Dorsolateral prefrontal cortex (tissue), 120 donors: ENCODE measurements at regions of chr12 and their contacts with region 1.

Region 1: DNA sequence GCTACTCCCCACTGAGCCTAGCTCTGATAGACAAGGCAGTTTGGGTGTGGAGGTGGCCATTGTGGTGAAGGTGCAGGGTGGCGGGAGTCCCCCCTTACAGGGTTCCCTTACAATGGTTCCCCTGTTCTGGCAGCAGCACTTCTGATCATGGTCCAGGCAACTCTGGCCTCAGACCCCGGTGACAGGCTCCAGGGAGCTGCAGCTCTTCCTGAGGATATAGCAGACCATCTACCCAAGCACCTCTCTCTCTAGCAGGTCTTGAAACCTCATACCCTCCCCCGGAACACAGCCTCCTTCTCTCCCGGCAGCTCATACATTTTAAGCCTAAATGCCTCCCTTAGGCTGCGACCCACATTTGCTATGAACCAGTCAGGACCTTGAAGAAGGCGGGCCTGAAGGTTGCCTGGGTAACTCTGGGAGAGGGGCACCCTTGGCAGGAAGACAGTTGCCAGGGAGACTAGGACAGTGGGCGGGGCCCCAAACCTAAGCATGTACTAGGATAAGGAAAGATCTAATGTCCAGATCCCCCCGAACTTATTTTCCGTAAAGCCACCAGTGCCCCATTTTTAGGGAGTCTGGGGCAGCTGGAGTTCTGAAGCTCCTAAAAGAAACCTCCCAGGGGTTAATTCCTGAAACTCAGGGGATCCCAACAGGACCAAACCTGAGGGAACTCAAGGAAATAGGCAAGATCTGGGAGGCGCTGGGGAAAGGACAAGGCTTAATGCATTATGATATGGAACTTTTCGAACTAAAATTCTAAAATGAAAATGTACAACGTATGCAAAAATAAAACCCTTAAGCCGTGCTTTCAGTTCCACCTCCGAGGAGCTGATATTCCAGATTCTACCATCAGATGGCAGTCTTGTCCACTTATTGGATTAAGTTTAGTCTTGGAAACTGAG is 4.5 kb upstream of the GDF11 start:
- DNase-seq: peak; percentile 48 to 88 (median 80)
- H3K4me3 ChIP-seq: peak overlapping the region; percentile 32 to 78 (median 63)
- H3K27ac ChIP-seq: peak overlapping the region; percentile 25 to 96 (median 87)
- H3K27me3 ChIP-seq: no peaks in the 10 kb centered on the region
- CTCF ChIP-seq: peak; percentile 79 to 98 (median 94)

Region 2: DNA sequence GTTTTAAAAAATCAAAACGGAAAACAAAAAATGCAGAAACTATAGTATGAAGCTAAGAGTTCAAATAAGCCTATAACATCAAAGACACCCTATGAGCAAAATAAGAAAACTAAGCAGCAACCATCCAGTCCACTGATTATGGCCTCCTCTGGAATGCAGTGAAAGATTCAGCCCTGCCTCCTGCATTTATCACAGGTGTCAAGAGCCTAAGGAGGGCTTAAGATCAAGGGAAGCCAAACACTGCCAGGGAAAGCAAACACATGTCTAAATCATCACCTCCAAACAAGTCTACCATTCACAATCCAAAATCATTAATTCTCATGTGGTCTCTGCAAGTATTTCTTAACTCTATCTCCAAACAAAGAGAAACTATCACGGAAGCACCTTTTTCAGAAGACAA is 50.8 kb after region 1 on chr12:
- intact Hi-C with region 1: loop called in 1 of 2 experiments (anchors 5 kb)
- DNase-seq: no peak
- H3K4me3 ChIP-seq: no peak overlapping the region
- H3K27ac ChIP-seq: no peak overlapping the region
- H3K27me3 ChIP-seq: no peaks in the 10 kb centered on the region
- CTCF ChIP-seq: no peak

Region 3: GRCh38 chr12:55797068-55797467 is 58.7 kb after region 1 on chr12:
- intact Hi-C with region 1: loop called (anchors 5 kb)
- DNase-seq: peak in 2 of 10 donors; percentile 10 to 45
- H3K4me3 ChIP-seq: no peak overlapping the region
- H3K27ac ChIP-seq: peak overlapping the region in 2 of 59 donors; percentile 7 to 11
- H3K27me3 ChIP-seq: no peaks in the 10 kb centered on the region
- CTCF ChIP-seq: peak in 55 of 56 donors; percentile 40 to 83 (median 60)

Region 4: GRCh38 chr12:55817346-55818139 is 79.2 kb after region 1 on chr12 and contains the starts of genes ORMDL2 and SARNP:
- intact Hi-C with region 1: loop called (anchors 5 kb)
- DNase-seq: peak; percentile 92 to 100 (median 99)
- H3K4me3 ChIP-seq: peak within 1 kb of the TSS; percentile 56 to 100 (median 93)
- H3K27ac ChIP-seq: peak within 1 kb of the TSS in 58 of 59 donors; percentile 56 to 94 (median 87)
- H3K27me3 ChIP-seq: no peaks in the 10 kb centered on the region
- CTCF ChIP-seq: peak in 17 of 56 donors; percentile 4 to 37 (median 15)
- total RNA-seq, gene ORMDL2: 5.9 to 21.8 (median 11.6) TPM
- total RNA-seq, gene SARNP: 26.4 to 54.1 (median 39.1) TPM

Region 5: DNA sequence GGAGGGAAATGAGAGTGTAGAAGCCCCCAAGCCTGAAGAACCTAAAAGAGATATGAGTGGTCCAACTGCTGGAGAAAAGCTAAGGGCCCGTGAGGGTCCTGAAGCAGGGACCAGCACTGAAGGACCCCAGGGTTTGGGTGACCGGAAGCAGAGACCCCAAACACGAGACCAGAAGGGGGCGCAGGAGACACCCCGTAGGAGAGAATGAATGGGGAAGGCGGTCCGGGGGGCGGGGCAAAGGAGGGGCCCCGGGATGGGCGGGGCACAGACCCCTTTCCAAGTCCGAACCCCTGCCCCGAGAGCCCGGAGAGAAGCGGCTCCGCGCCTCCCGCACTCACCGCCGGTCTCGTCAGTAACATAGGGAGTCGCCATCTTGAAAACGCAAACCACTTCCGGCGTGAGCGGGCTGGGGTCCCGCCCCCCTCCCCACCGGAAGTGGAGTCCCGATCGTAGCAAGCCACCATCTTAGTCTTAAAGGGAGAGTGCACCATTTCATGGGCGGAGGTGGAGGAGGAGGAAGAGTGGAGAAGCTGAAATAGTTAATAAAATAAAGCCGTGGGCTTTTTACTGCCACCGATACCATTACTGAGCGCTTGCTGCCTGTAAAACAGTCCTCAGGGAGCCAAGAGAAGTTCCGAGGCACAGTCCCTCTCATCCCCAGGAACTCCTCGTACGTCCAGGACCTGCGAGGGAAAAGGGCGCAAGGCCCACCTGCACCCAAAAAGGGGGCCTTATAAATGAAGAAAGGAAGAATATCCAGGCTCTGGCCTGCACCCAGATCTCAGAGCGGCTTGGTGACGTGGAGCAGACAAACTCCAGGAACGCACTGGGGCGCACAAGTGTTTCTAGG is 188.6 kb after region 1 on chr12:
- intact Hi-C with region 1: loop called (anchors 5 kb)
- DNase-seq: peak; percentile 78 to 91 (median 85)
- H3K4me3 ChIP-seq: peak overlapping the region; percentile 62 to 100 (median 95)
- H3K27ac ChIP-seq: peak overlapping the region; percentile 89 to 99 (median 97)
- H3K27me3 ChIP-seq: no peaks in the 10 kb centered on the region
- CTCF ChIP-seq: peak; percentile 68 to 97 (median 87)

Region 6: GRCh38 chr12:55940065-55940732 is 201.8 kb after region 1 on chr12:
- intact Hi-C with region 1: loop called (anchors 2 to 5 kb)
- DNase-seq: peak; percentile 68 to 89 (median 86)
- H3K4me3 ChIP-seq: peak overlapping the region in 50 of 59 donors; percentile 0 to 54 (median 36)
- H3K27ac ChIP-seq: peak overlapping the region in 25 of 59 donors; percentile 3 to 71 (median 41)
- H3K27me3 ChIP-seq: no peaks in the 10 kb centered on the region
- CTCF ChIP-seq: peak; percentile 34 to 97 (median 91)